ENCODE measurements at regions of chr9 and their contacts with region 1.

Region 1: DNA sequence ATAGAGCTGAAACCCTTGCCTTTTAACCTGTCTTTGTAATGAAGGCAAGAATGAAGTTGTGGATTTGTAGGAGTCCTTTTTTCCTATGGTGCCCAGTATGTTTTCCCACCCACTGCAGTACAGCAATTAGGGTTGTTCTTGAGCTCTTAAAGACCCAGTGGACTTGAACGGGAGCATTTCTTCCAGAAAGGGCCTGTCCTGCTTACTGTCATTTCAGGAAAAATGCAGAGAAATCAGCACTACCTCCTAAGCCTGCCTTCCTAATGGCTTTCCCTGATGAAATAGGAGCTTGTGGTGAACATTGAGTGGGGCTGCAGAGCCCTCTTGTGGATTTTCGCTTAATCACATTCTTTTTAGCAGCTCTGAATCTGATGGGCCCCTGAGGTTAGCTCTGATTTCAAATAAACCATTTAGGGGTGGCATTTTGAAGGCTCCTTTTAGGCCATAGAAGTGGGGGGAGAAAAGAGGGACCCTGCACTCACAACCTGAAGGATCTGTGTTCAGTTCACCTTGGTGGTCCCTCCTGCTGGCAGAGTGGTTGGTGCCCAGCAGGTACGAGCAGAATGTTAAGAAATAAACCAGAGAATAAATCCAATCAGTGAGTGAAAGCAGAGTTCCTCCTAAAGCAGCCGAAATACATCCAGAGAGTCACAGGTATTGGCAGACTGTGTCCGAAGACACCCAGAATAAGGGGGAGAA is 188.0 kb upstream of the KLF9 start:
- DNase-seq: peak; percentile 71
- H3K4me3 Mint-ChIP-seq: no peak overlapping the region
- H3K27ac Mint-ChIP-seq: no peak overlapping the region
- H3K4me1 Mint-ChIP-seq: peaks cover 8% of the 10 kb centered on the region
- H3K27me3 Mint-ChIP-seq: no peaks in the 10 kb centered on the region

Region 2: GRCh38 chr9:69672596-69673310 is 929.7 kb before region 1 on chr9:
- CTCF ChIA-PET with region 1: no interaction called
- intact Hi-C with region 1: loop called (anchors 5 kb)
- DNase-seq: peak; percentile 81
- H3K4me3 Mint-ChIP-seq: peak overlapping the region; percentile 72
- H3K27ac Mint-ChIP-seq: no peak overlapping the region
- H3K4me1 Mint-ChIP-seq: peaks cover 9% of the 10 kb centered on the region
- H3K27me3 Mint-ChIP-seq: peaks cover 12% of the 10 kb centered on the region

Region 3: GRCh38 chr9:69945671-69946141 is 656.8 kb before region 1 on chr9:
- CTCF ChIA-PET with region 1: no interaction called
- intact Hi-C with region 1: no loop called
- DNase-seq: no peak
- H3K4me3 Mint-ChIP-seq: no peak overlapping the region
- H3K27ac Mint-ChIP-seq: no peak overlapping the region
- H3K4me1 Mint-ChIP-seq: no peaks in the 10 kb centered on the region
- H3K27me3 Mint-ChIP-seq: peaks cover 13% of the 10 kb centered on the region

Region 4: GRCh38 chr9:70147614-70148013 is 454.9 kb before region 1 on chr9:
- CTCF ChIA-PET with region 1: interaction called, 4 read pairs
- intact Hi-C with region 1: loop called (anchors 1 kb)
- DNase-seq: no peak
- H3K4me3 Mint-ChIP-seq: no peak overlapping the region
- H3K27ac Mint-ChIP-seq: no peak overlapping the region
- H3K4me1 Mint-ChIP-seq: no peaks in the 10 kb centered on the region
- H3K27me3 Mint-ChIP-seq: peaks cover 2% of the 10 kb centered on the region

Region 5: DNA sequence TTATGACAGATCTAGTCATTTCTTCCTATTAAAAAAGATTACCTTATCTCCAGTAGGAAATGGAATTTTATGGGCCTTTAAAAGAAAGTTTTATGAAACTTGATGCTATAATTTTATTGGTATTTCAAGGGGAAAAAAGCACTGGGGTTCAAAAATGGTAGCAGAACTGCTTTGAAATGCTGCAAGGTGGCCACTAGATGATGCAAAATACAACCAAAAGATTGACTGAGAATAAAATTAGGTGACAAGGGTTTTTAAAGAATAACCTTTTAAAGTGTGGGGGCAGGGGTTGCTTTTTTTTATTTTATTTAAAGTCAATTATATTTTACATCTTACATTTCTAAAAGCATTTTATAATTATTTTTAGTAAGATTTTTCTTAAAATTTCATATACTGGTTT is 249.7 kb before region 1 on chr9:
- CTCF ChIA-PET with region 1: interaction called, 12 read pairs
- intact Hi-C with region 1: loop called (anchors 1 kb)
- DNase-seq: no peak
- H3K4me3 Mint-ChIP-seq: no peak overlapping the region
- H3K27ac Mint-ChIP-seq: no peak overlapping the region
- H3K4me1 Mint-ChIP-seq: no peaks in the 10 kb centered on the region
- H3K27me3 Mint-ChIP-seq: no peaks in the 10 kb centered on the region

Region 6: GRCh38 chr9:70406434-70406862 is 196.0 kb before region 1 on chr9:
- CTCF ChIA-PET with region 1: interaction called, 10 read pairs
- intact Hi-C with region 1: loop called (anchors 1 kb)
- DNase-seq: peak; percentile 75
- H3K4me3 Mint-ChIP-seq: peak overlapping the region; percentile 76
- H3K27ac Mint-ChIP-seq: peak overlapping the region; percentile 96
- H3K4me1 Mint-ChIP-seq: peaks cover 78% of the 10 kb centered on the region
- H3K27me3 Mint-ChIP-seq: no peaks in the 10 kb centered on the region

Region 7: GRCh38 chr9:70466976-70467561 is 135.4 kb before region 1 on chr9:
- CTCF ChIA-PET with region 1: interaction called, 6 read pairs
- intact Hi-C with region 1: loop called (anchors 1 kb)
- DNase-seq: peak; percentile 73
- H3K4me3 Mint-ChIP-seq: peak overlapping the region; percentile 7
- H3K27ac Mint-ChIP-seq: peak overlapping the region; percentile 83
- H3K4me1 Mint-ChIP-seq: peaks cover 72% of the 10 kb centered on the region
- H3K27me3 Mint-ChIP-seq: no peaks in the 10 kb centered on the region

Region 8: DNA sequence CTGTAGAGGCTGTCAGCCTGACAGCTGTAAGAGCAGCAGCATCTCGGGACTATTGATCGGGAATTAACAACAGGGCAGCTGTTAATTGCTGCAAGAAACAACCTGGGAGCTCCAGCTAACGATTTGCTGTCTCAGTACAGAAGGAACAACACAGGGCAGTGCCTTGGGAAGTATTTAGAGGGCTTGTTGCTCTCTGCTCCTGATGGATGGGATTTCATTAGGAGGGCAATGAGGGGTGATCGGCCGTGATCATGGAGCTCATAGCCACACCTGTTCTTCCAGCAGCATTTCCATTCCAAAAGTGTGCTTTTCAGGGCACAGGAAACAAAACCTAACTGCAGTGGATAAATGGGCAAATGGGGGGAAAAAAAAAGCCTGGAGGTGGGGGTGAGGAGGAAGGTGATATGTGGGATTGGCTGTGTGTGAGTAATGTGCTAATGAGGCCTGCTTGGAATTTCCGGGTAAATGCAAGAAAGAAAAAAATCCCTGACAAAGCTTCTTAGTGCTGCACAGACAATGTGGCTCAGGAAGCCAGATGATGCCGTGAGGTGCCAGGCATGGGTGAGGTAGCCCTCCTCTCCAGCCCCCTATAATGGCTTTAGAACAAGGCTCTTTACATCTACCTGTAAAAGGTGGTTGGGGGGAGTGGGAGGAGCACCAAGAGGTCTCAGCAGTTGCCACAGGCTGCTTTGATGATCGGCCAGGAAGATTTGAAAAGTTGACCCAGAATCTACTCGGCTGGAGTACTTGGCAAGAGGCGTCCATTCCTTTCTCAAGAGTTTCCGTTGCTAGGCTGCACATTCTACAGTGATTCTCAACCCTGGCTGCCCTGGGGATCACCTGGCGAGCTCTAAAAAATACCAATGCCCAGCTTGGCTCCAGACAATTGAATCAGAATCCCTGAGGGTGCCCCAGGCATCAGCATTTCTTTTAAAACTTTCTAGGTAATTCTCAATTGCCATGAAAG is 48.5 kb before region 1 on chr9:
- CTCF ChIA-PET with region 1: interaction called, 14 read pairs
- intact Hi-C with region 1: no loop called
- DNase-seq: no peak
- H3K4me3 Mint-ChIP-seq: no peak overlapping the region
- H3K27ac Mint-ChIP-seq: no peak overlapping the region
- H3K4me1 Mint-ChIP-seq: peaks cover 16% of the 10 kb centered on the region
- H3K27me3 Mint-ChIP-seq: no peaks in the 10 kb centered on the region

Region 9: GRCh38 chr9:71270554-71270953 is 668.1 kb after region 1 on chr9:
- CTCF ChIA-PET with region 1: no interaction called
- intact Hi-C with region 1: no loop called
- DNase-seq: no peak
- H3K4me3 Mint-ChIP-seq: no peak overlapping the region
- H3K27ac Mint-ChIP-seq: no peak overlapping the region
- H3K4me1 Mint-ChIP-seq: no peaks in the 10 kb centered on the region
- H3K27me3 Mint-ChIP-seq: peaks cover 4% of the 10 kb centered on the region

Measured in activated naive CD4-positive, alpha-beta T cell treated with anti-CD3 and anti-CD28 coated beads for 36 hours (primary cell).